Ascending aorta (tissue), 2 donors: ENCODE measurements at regions of chr17 and their contacts with region 1.

Region 1: GRCh38 chr17:7252176-7253043 is at the start of gene ELP5:
- DNase-seq: peak; percentile 86 to 98
- H3K4me3 ChIP-seq: peak within 1 kb of the TSS; percentile 84 to 94
- H3K27ac ChIP-seq: peak within 1 kb of the TSS; percentile 100
- H3K4me1 ChIP-seq: peaks cover 16 to 27% of the 10 kb centered on the region in 2 donors
- H3K27me3 ChIP-seq: no peaks in the 10 kb centered on the region
- CTCF ChIP-seq: peak; percentile 15 to 31 (median 21)
- total RNA-seq, gene ELP5: 106 TPM

Region 2: GRCh38 chr17:7239091-7240027 is 13.1 kb before region 1 on chr17 and contains the start of gene PHF23:
- intact Hi-C with region 1: loop called (anchors 1 kb)
- DNase-seq: peak; percentile 99 to 100
- H3K4me3 ChIP-seq: peak within 1 kb of the TSS; percentile 92 to 99
- H3K27ac ChIP-seq: peak within 1 kb of the TSS; percentile 88 to 96
- H3K4me1 ChIP-seq: peaks cover 12 to 25% of the 10 kb centered on the region in 2 donors
- H3K27me3 ChIP-seq: no peaks in the 10 kb centered on the region
- CTCF ChIP-seq: peak in 1 of 3 experiments; percentile 37
- total RNA-seq, gene PHF23: 13.3 TPM

Region 3: DNA sequence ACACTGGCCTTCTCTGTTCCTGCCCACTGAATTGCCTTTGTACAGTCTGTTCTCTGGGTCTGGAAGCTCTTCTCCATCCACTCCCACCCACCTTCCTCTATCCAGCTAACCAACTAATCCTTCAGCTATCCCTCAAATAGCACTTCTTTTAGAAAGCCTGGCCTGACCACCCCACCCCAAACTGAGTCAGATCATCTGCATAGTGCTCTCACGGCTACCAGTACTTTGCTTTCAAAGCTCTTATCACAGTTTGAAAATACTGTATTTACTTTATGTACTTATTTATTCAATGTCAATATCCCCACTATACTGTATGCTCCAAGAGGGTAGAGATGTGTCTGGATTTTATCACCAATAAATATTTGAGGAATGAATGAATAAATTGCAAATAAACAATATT is 14.4 kb after region 1 on chr17:
- intact Hi-C with region 1: no loop called
- DNase-seq: no peak
- H3K4me3 ChIP-seq: no peak overlapping the region
- H3K27ac ChIP-seq: no peak overlapping the region
- H3K4me1 ChIP-seq: peaks cover 8% of the 10 kb centered on the region in 2 donors
- H3K27me3 ChIP-seq: peaks cover 13% of the 10 kb centered on the region
- CTCF ChIP-seq: no peak

Region 4: GRCh38 chr17:7280519-7281429 is 28.4 kb after region 1 on chr17:
- intact Hi-C with region 1: loop called (anchors 1 kb)
- DNase-seq: peak; percentile 38 to 89
- H3K4me3 ChIP-seq: peak overlapping the region; percentile 56
- H3K27ac ChIP-seq: peak overlapping the region; percentile 73 to 81
- H3K4me1 ChIP-seq: peaks cover 9 to 16% of the 10 kb centered on the region in 2 donors
- H3K27me3 ChIP-seq: no peaks in the 10 kb centered on the region
- CTCF ChIP-seq: peak; percentile 90 to 94 (median 94)

Region 5: GRCh38 chr17:7306911-7307686 is 54.7 kb after region 1 on chr17 and contains the start of gene EIF5A:
- intact Hi-C with region 1: loop called (anchors 2 kb)
- DNase-seq: peak; percentile 98 to 99
- H3K4me3 ChIP-seq: peak within 1 kb of the TSS; percentile 76 to 99
- H3K27ac ChIP-seq: peak within 1 kb of the TSS; percentile 97 to 100
- H3K4me1 ChIP-seq: peaks cover 3 to 26% of the 10 kb centered on the region in 2 donors
- H3K27me3 ChIP-seq: no peaks in the 10 kb centered on the region
- CTCF ChIP-seq: no peak
- total RNA-seq, gene EIF5A: 248 TPM

Region 6: DNA sequence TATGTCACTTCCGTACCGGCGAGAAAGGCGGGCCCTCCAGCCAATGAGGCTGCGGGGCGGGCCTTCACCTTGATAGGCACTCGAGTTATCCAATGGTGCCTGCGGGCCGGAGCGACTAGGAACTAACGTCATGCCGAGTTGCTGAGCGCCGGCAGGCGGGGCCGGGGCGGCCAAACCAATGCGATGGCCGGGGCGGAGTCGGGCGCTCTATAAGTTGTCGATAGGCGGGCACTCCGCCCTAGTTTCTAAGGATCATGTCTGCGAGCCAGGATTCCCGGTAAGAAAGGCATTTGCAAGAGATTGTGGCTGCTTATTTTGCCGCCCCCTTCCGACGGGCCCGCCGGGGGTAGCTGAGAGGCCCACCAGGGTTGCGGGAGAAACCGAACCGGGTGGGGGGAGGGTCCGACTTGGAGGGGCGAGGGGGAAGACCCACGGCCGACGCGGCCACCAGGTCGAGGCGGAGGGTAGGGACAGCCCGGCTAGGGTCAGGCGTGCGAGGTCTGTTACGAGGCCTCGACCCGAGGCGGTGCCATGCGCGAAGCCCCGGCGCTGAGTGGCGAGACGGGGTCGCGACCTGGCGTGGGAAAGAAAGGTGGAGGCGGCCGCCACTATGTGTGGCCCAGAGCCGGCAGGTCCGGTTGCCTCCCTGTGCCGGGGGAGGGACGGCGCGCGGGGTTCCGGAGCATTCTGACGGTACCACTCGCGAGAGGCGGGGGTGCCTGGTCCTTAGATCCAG is 320.3 kb after region 1 on chr17:
- intact Hi-C with region 1: loop called (anchors 5 kb)
- DNase-seq: peak; percentile 99 to 100
- H3K4me3 ChIP-seq: peak overlapping the region; percentile 78 to 94
- H3K27ac ChIP-seq: peak overlapping the region; percentile 93 to 99
- H3K4me1 ChIP-seq: peaks cover 0 to 15% of the 10 kb centered on the region in 2 donors
- H3K27me3 ChIP-seq: no peaks in the 10 kb centered on the region
- CTCF ChIP-seq: no peak